ENCODE measurements at regions of chr19 and their contacts with region 1.

Region 1: GRCh38 chr19:18007044-18007916 is 690 bp upstream of the ARRDC2 start:
- DNase-seq: peak; percentile 82
- ATAC-seq: peak; percentile 70
- H3K4me3 Mint-ChIP-seq: peak overlapping the region; percentile 72
- H3K27ac Mint-ChIP-seq: peak overlapping the region; percentile 83
- H3K4me1 Mint-ChIP-seq: peaks cover 40% of the 10 kb centered on the region
- H3K27me3 Mint-ChIP-seq: no peaks in the 10 kb centered on the region

Region 2: GRCh38 chr19:17669419-17669818 is 337.9 kb before region 1 on chr19:
- CTCF ChIA-PET with region 1: no interaction called
- DNase-seq: no peak
- ATAC-seq: no peak
- H3K4me3 Mint-ChIP-seq: no peak overlapping the region
- H3K27ac Mint-ChIP-seq: no peak overlapping the region
- H3K4me1 Mint-ChIP-seq: no peaks in the 10 kb centered on the region
- H3K27me3 Mint-ChIP-seq: peaks cover 2% of the 10 kb centered on the region

Region 3: DNA sequence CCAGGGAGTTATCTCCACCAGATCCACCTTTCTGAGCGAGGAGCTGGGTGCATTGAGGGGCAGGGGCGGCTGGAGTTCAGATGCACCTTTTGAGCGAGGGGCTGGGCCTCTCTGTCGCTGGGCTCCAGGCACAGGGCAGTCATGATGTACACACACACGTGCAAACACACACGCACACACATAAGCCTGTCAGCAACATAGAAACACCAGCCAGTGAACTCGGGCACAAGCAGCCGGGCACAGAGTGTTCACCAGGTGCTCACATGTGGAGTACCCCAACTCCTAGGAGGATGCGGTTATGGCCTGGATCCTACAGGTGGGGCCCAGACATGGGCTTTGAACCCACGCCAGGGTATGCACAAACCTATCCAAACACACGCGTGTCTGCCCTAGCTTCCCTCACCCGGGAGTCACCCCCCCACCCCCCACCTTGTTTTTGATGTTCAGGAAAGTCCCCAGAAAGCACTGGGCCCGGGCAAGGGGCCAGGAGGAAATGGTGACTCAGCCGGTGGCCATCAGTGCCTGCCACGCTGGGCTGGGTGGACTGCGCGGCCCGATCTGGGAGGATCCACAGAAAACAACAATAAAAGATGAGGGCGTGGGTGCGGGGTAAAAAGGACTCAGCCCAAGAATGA is 14.0 kb after region 1 on chr19:
- CTCF ChIA-PET with region 1: interaction called, 35 read pairs
- DNase-seq: no peak
- ATAC-seq: peak; percentile 7
- H3K4me3 Mint-ChIP-seq: peak overlapping the region; percentile 59
- H3K27ac Mint-ChIP-seq: peak overlapping the region; percentile 88
- H3K4me1 Mint-ChIP-seq: peaks cover 45% of the 10 kb centered on the region
- H3K27me3 Mint-ChIP-seq: no peaks in the 10 kb centered on the region

Region 4: GRCh38 chr19:18044825-18045304 is 37.6 kb after region 1 on chr19:
- CTCF ChIA-PET with region 1: interaction called, 12 read pairs
- DNase-seq: peak; percentile 98
- ATAC-seq: peak; percentile 99
- H3K4me3 Mint-ChIP-seq: peak overlapping the region; percentile 42
- H3K27ac Mint-ChIP-seq: peak overlapping the region; percentile 85
- H3K4me1 Mint-ChIP-seq: peaks cover 31% of the 10 kb centered on the region
- H3K27me3 Mint-ChIP-seq: peaks cover 26% of the 10 kb centered on the region

Region 5: GRCh38 chr19:18058208-18059030 is 51.1 kb after region 1 on chr19:
- CTCF ChIA-PET with region 1: interaction called, 118 read pairs
- DNase-seq: peak; percentile 85
- ATAC-seq: peak; percentile 93
- H3K4me3 Mint-ChIP-seq: peak overlapping the region; percentile 18
- H3K27ac Mint-ChIP-seq: peak overlapping the region; percentile 63
- H3K4me1 Mint-ChIP-seq: peaks cover 8% of the 10 kb centered on the region
- H3K27me3 Mint-ChIP-seq: no peaks in the 10 kb centered on the region